ENCODE measurements at regions of chr1 and their contacts with region 1.

Region 1: GRCh38 chr1:173409613-173410012 is 67.5 kb upstream of the PRDX6 start:
- DNase-seq: no peak
- ATAC-seq: no peak
- H3K4me3 ChIP-seq: no peak overlapping the region
- H3K27ac ChIP-seq: no peak overlapping the region
- H3K4me1 ChIP-seq: peaks cover 17% of the 10 kb centered on the region
- CTCF ChIP-seq: no peak
- EP300 ChIP-seq: no peak
- POLR2A ChIP-seq: no peak
- RAD21 ChIP-seq: no peak

Region 2: DNA sequence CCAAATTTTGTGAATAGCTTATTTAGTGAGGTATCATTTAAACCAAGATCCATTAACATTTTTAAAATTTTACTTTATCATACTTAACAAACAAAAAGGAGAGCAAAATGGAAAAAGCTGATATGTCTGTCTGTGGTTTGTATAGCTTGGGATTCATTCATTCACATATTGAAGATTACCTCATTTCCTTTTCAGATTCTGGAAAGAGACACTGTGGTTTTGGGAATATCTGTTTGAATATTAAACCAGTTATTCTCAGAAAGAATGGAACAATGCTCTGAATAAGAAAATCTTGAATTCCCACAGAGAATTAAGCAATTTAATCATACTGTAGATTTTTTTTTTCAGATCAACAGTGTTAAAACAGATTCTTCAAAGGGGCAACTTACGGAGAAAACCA is 26.3 kb before region 1 on chr1:
- CTCF ChIA-PET with region 1: no interaction called
- POLR2A ChIA-PET with region 1: no interaction called
- DNase-seq: no peak
- ATAC-seq: no peak
- H3K4me3 ChIP-seq: no peak overlapping the region
- H3K27ac ChIP-seq: no peak overlapping the region
- H3K4me1 ChIP-seq: no peaks in the 10 kb centered on the region
- CTCF ChIP-seq: no peak
- EP300 ChIP-seq: no peak
- POLR2A ChIP-seq: no peak
- RAD21 ChIP-seq: no peak

Region 3: GRCh38 chr1:173420330-173420806 is 10.8 kb after region 1 on chr1:
- CTCF ChIA-PET with region 1: interaction called, 12 read pairs
- POLR2A ChIA-PET with region 1: no interaction called
- DNase-seq: peak; percentile 31 to 81
- ATAC-seq: peak; percentile 90 to 98
- H3K4me3 ChIP-seq: no peak overlapping the region
- H3K27ac ChIP-seq: peak overlapping the region; percentile 7 to 31; a peak in 3 of 6 replicates
- H3K4me1 ChIP-seq: peaks cover 10% of the 10 kb centered on the region; the same call in 2 of the 3 replicates
- CTCF ChIP-seq: peak; percentile 89
- EP300 ChIP-seq: no peak
- POLR2A ChIP-seq: no peak
- RAD21 ChIP-seq: peak; percentile 90 to 94

Region 4: DNA sequence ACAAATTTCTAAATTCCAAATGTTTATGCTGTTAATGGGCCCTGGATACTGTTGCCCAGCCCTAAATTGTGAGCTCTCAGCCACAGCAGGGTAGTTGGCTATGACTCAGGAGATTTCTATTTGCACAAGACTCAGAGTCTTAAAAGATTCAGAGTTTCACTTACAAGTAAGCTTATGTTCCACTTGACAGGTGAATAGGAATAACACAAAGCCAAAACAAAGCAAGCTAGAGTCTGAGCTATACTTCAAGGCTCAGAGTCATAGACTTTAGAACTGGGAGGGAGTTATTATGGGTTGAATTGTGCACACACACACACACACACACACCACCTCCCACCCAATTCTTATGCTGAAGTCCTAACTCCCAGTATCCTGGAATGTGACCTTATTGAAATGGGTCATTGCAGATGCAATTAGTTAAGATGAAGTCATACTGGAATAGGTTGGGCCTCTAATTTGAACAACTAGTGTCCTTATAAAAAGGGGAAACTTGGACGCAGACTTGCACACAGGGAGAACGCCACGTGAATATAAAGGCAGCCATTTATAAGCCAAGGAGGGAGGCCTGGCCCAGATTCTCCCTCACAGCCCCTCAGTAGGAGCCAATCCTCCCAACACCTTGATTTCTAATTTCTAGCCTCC is 97.7 kb after region 1 on chr1:
- CTCF ChIA-PET with region 1: no interaction called
- POLR2A ChIA-PET with region 1: no interaction called
- DNase-seq: peak in 1 of 2 experiments; percentile 63
- ATAC-seq: peak; percentile 87 to 91
- H3K4me3 ChIP-seq: no peak overlapping the region
- H3K27ac ChIP-seq: peak overlapping the region; percentile 3 to 50; a peak in 4 of 6 replicates
- H3K4me1 ChIP-seq: peaks cover 27% of the 10 kb centered on the region
- CTCF ChIP-seq: no peak
- EP300 ChIP-seq: no peak
- POLR2A ChIP-seq: no peak
- RAD21 ChIP-seq: no peak

Measured in A549 (cell line).